ENCODE measurements at regions of chr18 and their contacts with region 1.

Region 1: GRCh38 chr18:48445540-48445939 is 36.4 kb upstream of the ZBTB7C start:
- DNase-seq: peak; percentile 85
- ATAC-seq: peak; percentile 76
- H3K4me3 Mint-ChIP-seq: no peak overlapping the region
- H3K27ac Mint-ChIP-seq: no peak overlapping the region
- H3K4me1 Mint-ChIP-seq: peaks cover 3% of the 10 kb centered on the region
- H3K27me3 Mint-ChIP-seq: peaks cover 25% of the 10 kb centered on the region

Region 2: GRCh38 chr18:48022531-48023329 is 422.8 kb before region 1 on chr18:
- CTCF ChIA-PET with region 1: no interaction called
- POLR2A ChIA-PET with region 1: no interaction called
- intact Hi-C with region 1: loop called (anchors 2 to 5 kb)
- DNase-seq: peak; percentile 16
- ATAC-seq: peak; percentile 76
- H3K4me3 Mint-ChIP-seq: no peak overlapping the region
- H3K27ac Mint-ChIP-seq: no peak overlapping the region
- H3K4me1 Mint-ChIP-seq: peaks cover 3% of the 10 kb centered on the region
- H3K27me3 Mint-ChIP-seq: peaks cover 11% of the 10 kb centered on the region

Region 3: DNA sequence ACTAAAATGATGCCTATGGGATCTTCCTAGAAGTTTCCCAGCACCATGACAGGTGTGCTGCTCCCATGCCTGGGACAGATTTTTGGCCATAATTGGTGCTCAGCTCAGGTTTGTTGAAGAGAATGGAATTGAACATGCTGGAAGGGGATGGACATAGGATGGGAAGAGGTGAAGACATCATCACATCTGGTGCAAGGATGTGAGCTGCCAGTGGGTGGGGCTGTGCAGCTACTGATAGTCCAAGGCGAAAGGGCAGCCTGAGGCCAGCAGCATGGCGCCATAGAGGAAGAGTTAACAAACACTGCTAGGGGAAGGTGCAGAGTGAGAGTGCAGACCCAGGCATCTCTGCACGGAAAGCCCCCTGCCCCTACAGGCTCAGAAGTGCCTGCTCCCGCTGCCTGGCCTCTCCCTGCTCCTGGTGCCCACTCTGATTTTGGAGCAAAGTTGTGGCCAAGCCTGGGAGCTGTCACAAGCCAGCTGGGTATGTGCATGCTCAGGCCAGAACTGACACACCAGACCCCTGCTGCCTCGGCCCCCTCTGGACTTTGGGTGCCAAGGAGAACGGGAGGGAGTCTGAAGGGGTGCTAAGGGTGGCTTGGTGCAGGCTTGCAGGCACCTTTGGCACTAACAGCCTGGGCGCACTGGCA is 214.9 kb before region 1 on chr18:
- CTCF ChIA-PET with region 1: interaction called, 3 read pairs
- POLR2A ChIA-PET with region 1: no interaction called
- intact Hi-C with region 1: loop called in 1 of 2 experiments (anchors 1 kb)
- DNase-seq: peak; percentile 51
- ATAC-seq: no peak
- H3K4me3 Mint-ChIP-seq: no peak overlapping the region
- H3K27ac Mint-ChIP-seq: no peak overlapping the region
- H3K4me1 Mint-ChIP-seq: peaks cover 3% of the 10 kb centered on the region
- H3K27me3 Mint-ChIP-seq: peaks cover 8% of the 10 kb centered on the region

Region 4: GRCh38 chr18:48455555-48456478 is 10.3 kb after region 1 on chr18:
- CTCF ChIA-PET with region 1: interaction called, 61 read pairs
- POLR2A ChIA-PET with region 1: no interaction called
- intact Hi-C with region 1: no loop called
- DNase-seq: peak; percentile 64
- ATAC-seq: peak; percentile 83
- H3K4me3 Mint-ChIP-seq: no peak overlapping the region
- H3K27ac Mint-ChIP-seq: peak overlapping the region; percentile 24
- H3K4me1 Mint-ChIP-seq: peaks cover 22% of the 10 kb centered on the region
- H3K27me3 Mint-ChIP-seq: peaks cover 43% of the 10 kb centered on the region

Region 5: GRCh38 chr18:48896690-48897511 is 451.4 kb after region 1 on chr18:
- CTCF ChIA-PET with region 1: no interaction called
- POLR2A ChIA-PET with region 1: no interaction called
- intact Hi-C with region 1: no loop called
- DNase-seq: peak; percentile 44
- ATAC-seq: peak; percentile 58
- H3K4me3 Mint-ChIP-seq: no peak overlapping the region
- H3K27ac Mint-ChIP-seq: no peak overlapping the region
- H3K4me1 Mint-ChIP-seq: peaks cover 14% of the 10 kb centered on the region
- H3K27me3 Mint-ChIP-seq: no peaks in the 10 kb centered on the region

Region 6: DNA sequence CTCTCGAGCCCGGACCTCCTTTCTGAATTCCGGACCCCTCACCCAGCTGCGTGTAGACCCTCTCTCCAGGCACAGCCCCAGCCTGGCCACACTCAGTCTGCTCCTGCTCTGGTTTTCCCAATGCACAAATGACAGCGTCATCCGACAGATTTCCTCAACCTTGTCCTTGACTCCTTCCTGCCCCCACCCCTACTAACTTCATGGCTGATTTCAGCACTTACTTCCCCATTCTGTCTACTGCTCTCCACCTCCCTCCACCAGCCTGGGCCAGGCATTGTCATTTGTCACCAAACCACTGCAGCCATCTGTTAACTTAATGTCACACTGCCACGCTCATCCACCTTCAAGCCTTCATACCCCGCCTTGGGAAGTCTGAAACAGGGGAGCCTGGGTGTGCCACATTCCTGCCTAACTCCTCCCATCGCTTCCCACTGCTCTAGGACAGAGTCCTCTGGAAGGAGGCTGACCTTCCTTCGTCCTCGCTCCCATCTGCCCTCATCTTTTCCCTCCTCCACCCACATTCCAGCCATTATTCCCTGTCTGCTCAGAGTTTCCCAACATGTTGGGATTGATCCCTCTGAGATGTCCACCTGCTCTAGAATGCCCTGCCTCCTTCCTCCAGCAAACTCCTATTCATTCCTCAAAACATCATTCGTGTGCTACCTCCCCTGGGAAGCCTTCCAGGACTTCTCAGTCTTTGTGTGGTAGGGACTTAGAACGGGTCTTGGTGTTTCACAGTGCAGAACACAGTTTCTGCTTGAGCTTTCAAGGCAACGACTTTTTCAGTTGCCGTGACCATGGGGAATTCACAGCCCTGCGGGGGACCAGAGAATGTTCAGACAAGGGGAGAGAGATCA is 547.4 kb after region 1 on chr18:
- CTCF ChIA-PET with region 1: no interaction called
- POLR2A ChIA-PET with region 1: no interaction called
- intact Hi-C with region 1: no loop called
- DNase-seq: no peak
- ATAC-seq: no peak
- H3K4me3 Mint-ChIP-seq: no peak overlapping the region
- H3K27ac Mint-ChIP-seq: no peak overlapping the region
- H3K4me1 Mint-ChIP-seq: peaks cover 15% of the 10 kb centered on the region
- H3K27me3 Mint-ChIP-seq: no peaks in the 10 kb centered on the region